ENCODE measurements at regions of chr3 and their contacts with region 1.

Region 1: GRCh38 chr3:32177702-32178198 is 60.7 kb upstream of the CMTM8 start:
- DNase-seq: peak; percentile 24 to 64 (median 44)
- H3K4me3 ChIP-seq: no peak overlapping the region
- H3K4me3 Mint-ChIP-seq: peak overlapping the region in 6 of 8 donors; percentile 54 to 68 (median 58)
- H3K27ac ChIP-seq: no peak overlapping the region
- H3K27ac Mint-ChIP-seq: peak overlapping the region in 4 of 7 donors; percentile 19 to 59 (median 28)
- H3K4me1 ChIP-seq: peaks cover 14% of the 10 kb centered on the region
- H3K4me1 Mint-ChIP-seq: peaks cover 8 to 12% (median 10%) of the 10 kb centered on the region in 4 donors
- H3K27me3 ChIP-seq: no peaks in the 10 kb centered on the region
- H3K27me3 Mint-ChIP-seq: no peaks in the 10 kb centered on the region

Region 2: DNA sequence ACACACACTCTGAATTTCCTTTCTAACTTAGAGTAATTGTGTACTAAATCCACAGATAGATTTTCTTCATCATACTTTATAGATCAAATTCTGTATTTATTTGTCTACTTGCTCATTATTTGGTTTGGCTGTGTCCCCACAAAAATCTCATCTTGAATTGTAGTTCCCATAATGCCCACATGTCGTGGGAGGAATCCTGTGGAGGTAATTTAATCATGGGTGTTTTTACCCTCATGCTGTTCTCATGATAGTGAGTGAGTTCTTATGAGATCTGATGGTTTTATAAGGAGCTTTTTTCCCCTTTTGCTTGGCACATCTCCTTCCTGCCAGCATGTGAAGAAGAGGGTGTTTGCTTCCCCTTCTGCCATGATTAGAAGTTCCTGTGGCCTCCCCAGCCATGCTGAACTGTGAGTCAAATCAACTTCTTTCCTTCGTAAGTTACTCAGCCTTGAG is 1769.6 kb before region 1 on chr3:
- CTCF ChIA-PET with region 1: no interaction called
- POLR2A ChIA-PET with region 1: no interaction called
- intact Hi-C with region 1: no loop called
- DNase-seq: no peak
- H3K4me3 ChIP-seq: no peak overlapping the region
- H3K4me3 Mint-ChIP-seq: no peak overlapping the region
- H3K27ac ChIP-seq: no peak overlapping the region
- H3K27ac Mint-ChIP-seq: no peak overlapping the region
- H3K4me1 ChIP-seq: no peaks in the 10 kb centered on the region
- H3K4me1 Mint-ChIP-seq: no peaks in the 10 kb centered on the region
- H3K27me3 ChIP-seq: no peaks in the 10 kb centered on the region
- H3K27me3 Mint-ChIP-seq: peaks cover 0 to 1% of the 10 kb centered on the region in 2 donors

Region 3: GRCh38 chr3:32238453-32239306 is 60.9 kb after region 1 on chr3 and contains the start of gene CMTM8:
- CTCF ChIA-PET with region 1: interaction called, 69 read pairs
- POLR2A ChIA-PET with region 1: no interaction called
- intact Hi-C with region 1: loop called (anchors 1 kb)
- DNase-seq: peak; percentile 65 to 72 (median 67)
- H3K4me3 ChIP-seq: peak within 1 kb of the TSS; percentile 58 to 63
- H3K4me3 Mint-ChIP-seq: peak within 1 kb of the TSS; percentile 87 to 93 (median 90)
- H3K27ac ChIP-seq: peak within 1 kb of the TSS; percentile 57
- H3K27ac Mint-ChIP-seq: peak within 1 kb of the TSS; percentile 41 to 91 (median 66)
- H3K4me1 ChIP-seq: peaks cover 35% of the 10 kb centered on the region
- H3K4me1 Mint-ChIP-seq: peaks cover 28 to 50% (median 41%) of the 10 kb centered on the region in 4 donors
- H3K27me3 ChIP-seq: no peaks in the 10 kb centered on the region
- H3K27me3 Mint-ChIP-seq: no peaks in the 10 kb centered on the region
- total RNA-seq, gene CMTM8: 16.8 to 17.8 TPM

Region 4: GRCh38 chr3:32296256-32297204 is 118.8 kb after region 1 on chr3:
- CTCF ChIA-PET with region 1: interaction called, 76 read pairs
- POLR2A ChIA-PET with region 1: interaction called, 4 read pairs
- intact Hi-C with region 1: loop called (anchors 1 kb)
- DNase-seq: peak; percentile 61 to 73 (median 68)
- H3K4me3 ChIP-seq: no peak overlapping the region
- H3K4me3 Mint-ChIP-seq: peak overlapping the region; percentile 49 to 86 (median 71)
- H3K27ac ChIP-seq: peak overlapping the region; percentile 63
- H3K27ac Mint-ChIP-seq: peak overlapping the region; percentile 81 to 97 (median 93)
- H3K4me1 ChIP-seq: peaks cover 52% of the 10 kb centered on the region
- H3K4me1 Mint-ChIP-seq: peaks cover 34 to 65% (median 48%) of the 10 kb centered on the region in 4 donors
- H3K27me3 ChIP-seq: no peaks in the 10 kb centered on the region
- H3K27me3 Mint-ChIP-seq: no peaks in the 10 kb centered on the region

Region 5: DNA sequence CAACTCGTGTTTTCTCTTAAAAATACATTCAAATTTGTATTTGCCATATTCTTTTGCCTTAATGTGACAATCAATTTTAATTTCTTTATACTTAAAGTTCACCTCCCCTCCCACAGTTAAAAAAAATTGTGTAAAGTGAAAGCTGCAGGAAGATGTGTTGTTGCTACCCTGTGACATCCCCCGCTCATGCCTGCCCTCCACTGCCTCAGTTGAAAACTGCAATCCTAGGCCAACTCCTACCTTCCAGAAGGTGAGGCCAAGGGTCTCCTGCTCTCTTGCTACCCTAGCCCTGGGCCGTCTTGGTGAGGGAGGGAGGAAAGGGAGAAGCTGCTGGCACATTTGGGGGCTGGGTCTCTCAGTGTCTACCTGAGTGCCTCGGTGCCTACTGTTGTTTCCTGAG is 156.9 kb after region 1 on chr3:
- CTCF ChIA-PET with region 1: interaction called, 145 read pairs
- POLR2A ChIA-PET with region 1: interaction called, 4 read pairs
- intact Hi-C with region 1: loop called (anchors 1 kb)
- DNase-seq: peak; percentile 54 to 63 (median 58)
- H3K4me3 ChIP-seq: no peak overlapping the region
- H3K4me3 Mint-ChIP-seq: peak overlapping the region in 7 of 8 donors; percentile 32 to 74 (median 55)
- H3K27ac ChIP-seq: peak overlapping the region; percentile 24
- H3K27ac Mint-ChIP-seq: peak overlapping the region; percentile 7 to 84 (median 75)
- H3K4me1 ChIP-seq: peaks cover 45% of the 10 kb centered on the region
- H3K4me1 Mint-ChIP-seq: peaks cover 39 to 60% (median 52%) of the 10 kb centered on the region in 4 donors
- H3K27me3 ChIP-seq: no peaks in the 10 kb centered on the region
- H3K27me3 Mint-ChIP-seq: no peaks in the 10 kb centered on the region

Region 6: DNA sequence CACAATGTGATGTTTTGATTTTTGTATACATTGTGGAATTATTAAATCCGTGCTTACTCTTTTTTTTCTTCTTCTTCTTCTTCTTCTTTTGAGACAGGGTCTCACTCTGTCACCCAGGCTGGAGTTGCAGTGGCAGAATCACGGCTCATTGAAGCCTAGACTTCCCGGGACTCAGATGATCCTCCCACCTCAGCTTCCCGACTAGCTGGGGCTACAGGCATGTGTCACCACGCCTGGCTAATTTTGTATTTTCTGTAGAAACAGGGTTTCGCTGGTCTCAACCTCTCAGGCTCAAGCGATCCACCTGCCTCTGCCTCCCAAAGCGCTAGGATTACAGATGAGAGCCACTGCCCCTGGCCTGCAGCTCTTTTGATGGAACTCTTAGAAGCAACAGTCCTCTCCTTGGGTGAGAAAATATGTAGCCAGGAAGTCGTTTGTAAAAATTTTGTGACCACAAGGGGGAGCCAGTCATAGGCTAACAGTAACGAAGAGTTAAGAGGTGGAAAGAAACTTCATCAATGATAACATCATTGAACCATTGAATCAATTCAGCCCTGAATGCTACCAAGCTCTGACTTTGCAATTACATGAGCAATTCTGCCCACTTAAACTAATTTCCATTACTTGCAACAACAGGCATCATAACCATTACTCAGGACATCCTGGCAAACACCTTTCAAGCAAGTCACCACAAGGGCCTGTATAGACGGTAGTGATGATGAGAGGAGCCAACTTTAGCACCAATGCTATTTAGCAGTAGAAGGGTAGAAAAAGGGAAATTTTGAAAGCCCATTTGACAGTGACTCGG is 197.2 kb after region 1 on chr3:
- CTCF ChIA-PET with region 1: interaction called, 31 read pairs
- POLR2A ChIA-PET with region 1: no interaction called
- intact Hi-C with region 1: loop called (anchors 1 kb)
- DNase-seq: peak; percentile 74 to 78 (median 78)
- H3K4me3 ChIP-seq: no peak overlapping the region
- H3K4me3 Mint-ChIP-seq: peak overlapping the region in 1 of 8 donors; percentile 21
- H3K27ac ChIP-seq: no peak overlapping the region
- H3K27ac Mint-ChIP-seq: peak overlapping the region in 5 of 7 donors; percentile 18 to 70 (median 33)
- H3K4me1 ChIP-seq: peaks cover 21% of the 10 kb centered on the region
- H3K4me1 Mint-ChIP-seq: peaks cover 18 to 28% (median 24%) of the 10 kb centered on the region in 4 donors
- H3K27me3 ChIP-seq: no peaks in the 10 kb centered on the region
- H3K27me3 Mint-ChIP-seq: no peaks in the 10 kb centered on the region

Region 7: DNA sequence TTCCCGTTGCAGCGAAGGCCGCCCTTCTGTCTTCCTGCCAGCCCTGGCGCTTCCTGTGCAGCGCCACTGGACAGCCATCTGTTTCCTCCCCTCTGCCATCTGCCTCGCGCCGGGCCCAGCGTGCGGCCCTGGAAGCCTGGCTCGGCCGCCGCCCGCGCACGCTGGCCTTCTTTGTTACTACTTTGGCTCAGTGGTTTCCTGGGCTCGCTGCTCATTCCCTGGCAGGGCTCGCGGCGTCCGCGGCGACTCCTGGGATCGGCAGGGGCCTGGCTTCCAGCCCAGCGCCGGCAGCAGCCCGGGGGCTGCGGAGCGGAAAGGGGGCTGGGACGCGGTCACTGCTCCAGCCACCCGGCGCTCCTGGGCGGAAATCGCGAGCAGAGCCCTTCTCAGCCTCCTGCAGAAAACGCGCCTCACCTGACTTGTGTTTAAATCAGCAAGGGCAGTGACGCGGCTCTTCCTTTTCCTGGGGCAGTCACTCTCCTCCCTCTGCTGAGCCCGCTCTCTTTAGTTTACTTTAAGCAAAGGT is 223.9 kb after region 1 on chr3:
- CTCF ChIA-PET with region 1: interaction called, 21 read pairs
- POLR2A ChIA-PET with region 1: no interaction called
- intact Hi-C with region 1: loop called (anchors 1 kb)
- DNase-seq: peak; percentile 60 to 75 (median 67)
- H3K4me3 ChIP-seq: peak overlapping the region; percentile 61 to 68
- H3K4me3 Mint-ChIP-seq: peak overlapping the region; percentile 87 to 95 (median 94)
- H3K27ac ChIP-seq: peak overlapping the region; percentile 84
- H3K27ac Mint-ChIP-seq: peak overlapping the region; percentile 95 to 100 (median 99)
- H3K4me1 ChIP-seq: peaks cover 72% of the 10 kb centered on the region
- H3K4me1 Mint-ChIP-seq: peaks cover 53 to 84% (median 69%) of the 10 kb centered on the region in 4 donors
- H3K27me3 ChIP-seq: no peaks in the 10 kb centered on the region
- H3K27me3 Mint-ChIP-seq: no peaks in the 10 kb centered on the region

Region 8: DNA sequence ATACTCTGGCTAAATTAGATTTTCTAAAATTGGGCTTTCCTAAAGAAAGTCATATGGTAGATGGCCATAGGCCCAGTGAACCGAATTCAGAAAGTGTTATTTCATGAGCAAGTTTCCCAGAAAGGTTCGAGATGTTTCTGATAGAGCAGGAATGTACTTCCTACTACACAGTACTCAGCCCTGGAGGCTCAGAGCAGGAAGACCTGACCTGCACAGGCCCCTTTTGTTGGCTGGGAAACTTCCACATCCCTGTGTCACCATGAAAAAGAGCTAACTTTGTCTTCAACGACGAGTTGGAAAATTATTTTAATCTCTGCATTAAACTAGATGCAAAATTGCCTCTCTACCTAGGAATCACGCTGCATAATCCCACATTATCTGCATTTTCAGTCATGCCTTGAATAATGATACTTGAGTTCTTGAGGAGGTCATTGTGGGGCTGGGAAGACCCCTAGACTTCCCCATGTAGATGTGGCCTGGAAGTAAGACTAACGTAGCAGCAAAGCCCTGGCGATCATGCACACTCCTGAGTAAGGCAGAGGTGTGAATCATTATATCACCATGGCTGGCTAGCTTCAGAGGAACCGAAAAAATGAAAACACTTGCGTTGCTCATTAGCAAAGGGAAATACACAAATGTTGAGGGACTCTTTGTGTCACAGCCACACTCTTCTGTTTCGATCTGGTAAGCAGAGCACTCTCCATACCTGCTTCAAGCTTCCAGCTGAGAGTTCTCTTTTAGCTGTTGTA is 261.0 kb after region 1 on chr3:
- CTCF ChIA-PET with region 1: no interaction called
- POLR2A ChIA-PET with region 1: no interaction called
- intact Hi-C with region 1: no loop called
- DNase-seq: peak in 1 of 5 donors; percentile 16
- H3K4me3 ChIP-seq: peak overlapping the region in 1 of 2 donors; percentile 34
- H3K4me3 Mint-ChIP-seq: peak overlapping the region; percentile 8 to 86 (median 70)
- H3K27ac ChIP-seq: peak overlapping the region; percentile 17
- H3K27ac Mint-ChIP-seq: peak overlapping the region; percentile 68 to 94 (median 85)
- H3K4me1 ChIP-seq: peaks cover 79% of the 10 kb centered on the region
- H3K4me1 Mint-ChIP-seq: peaks cover 53 to 91% (median 64%) of the 10 kb centered on the region in 4 donors
- H3K27me3 ChIP-seq: no peaks in the 10 kb centered on the region
- H3K27me3 Mint-ChIP-seq: no peaks in the 10 kb centered on the region